AG04450 (cell line): ENCODE measurements at regions of chr2 and their contacts with region 1.

Region 1: GRCh38 chr2:42828487-42829425 is 36.4 kb upstream of the HAAO start:
- DNase-seq: no peak
- H3K4me3 ChIP-seq: no peak overlapping the region
- H3K27ac ChIP-seq: no peak overlapping the region
- H3K27me3 ChIP-seq: no peaks in the 10 kb centered on the region
- CTCF ChIP-seq: peak; percentile 87

Region 2: GRCh38 chr2:42804338-42804737 is 24.4 kb before region 1 on chr2:
- CTCF ChIA-PET with region 1: no interaction called
- POLR2A ChIA-PET with region 1: no interaction called
- DNase-seq: no peak
- H3K4me3 ChIP-seq: no peak overlapping the region
- H3K27ac ChIP-seq: no peak overlapping the region
- H3K27me3 ChIP-seq: peaks cover 6% of the 10 kb centered on the region
- CTCF ChIP-seq: no peak

Region 3: DNA sequence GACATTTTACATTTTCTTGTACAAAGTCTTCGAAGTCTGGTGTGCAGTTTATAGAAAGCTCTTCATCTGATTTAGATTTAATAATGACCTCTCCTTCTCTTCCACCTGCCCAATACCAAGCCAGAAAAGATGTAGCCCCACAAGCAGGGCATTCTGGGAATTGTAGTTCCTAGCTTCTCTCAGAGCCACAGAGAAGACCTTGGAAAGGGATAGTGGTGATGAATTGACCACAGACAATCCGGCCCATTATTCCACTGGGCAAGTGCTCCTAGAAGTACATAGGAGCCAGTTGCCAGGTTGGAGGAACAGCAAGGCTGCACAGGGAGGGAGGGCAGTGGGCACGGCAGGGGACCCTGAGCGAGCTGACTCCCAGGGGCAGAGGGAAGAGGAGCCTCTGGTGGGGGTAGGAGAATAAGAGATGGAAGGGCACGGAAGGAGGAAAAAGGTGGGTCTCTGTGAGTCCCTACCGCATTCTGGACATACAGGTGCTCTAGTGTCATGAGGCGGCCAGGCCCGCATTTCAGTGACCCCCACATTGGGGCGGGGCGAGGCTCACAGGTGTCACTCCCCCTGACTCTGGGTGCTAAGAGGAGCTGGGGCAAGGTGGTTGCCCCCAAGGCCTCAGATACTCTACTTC is 116.1 kb after region 1 on chr2:
- CTCF ChIA-PET with region 1: interaction called, 40 read pairs
- POLR2A ChIA-PET with region 1: no interaction called
- DNase-seq: no peak
- H3K4me3 ChIP-seq: no peak overlapping the region
- H3K27ac ChIP-seq: no peak overlapping the region
- H3K27me3 ChIP-seq: no peaks in the 10 kb centered on the region
- CTCF ChIP-seq: no peak

Region 4: DNA sequence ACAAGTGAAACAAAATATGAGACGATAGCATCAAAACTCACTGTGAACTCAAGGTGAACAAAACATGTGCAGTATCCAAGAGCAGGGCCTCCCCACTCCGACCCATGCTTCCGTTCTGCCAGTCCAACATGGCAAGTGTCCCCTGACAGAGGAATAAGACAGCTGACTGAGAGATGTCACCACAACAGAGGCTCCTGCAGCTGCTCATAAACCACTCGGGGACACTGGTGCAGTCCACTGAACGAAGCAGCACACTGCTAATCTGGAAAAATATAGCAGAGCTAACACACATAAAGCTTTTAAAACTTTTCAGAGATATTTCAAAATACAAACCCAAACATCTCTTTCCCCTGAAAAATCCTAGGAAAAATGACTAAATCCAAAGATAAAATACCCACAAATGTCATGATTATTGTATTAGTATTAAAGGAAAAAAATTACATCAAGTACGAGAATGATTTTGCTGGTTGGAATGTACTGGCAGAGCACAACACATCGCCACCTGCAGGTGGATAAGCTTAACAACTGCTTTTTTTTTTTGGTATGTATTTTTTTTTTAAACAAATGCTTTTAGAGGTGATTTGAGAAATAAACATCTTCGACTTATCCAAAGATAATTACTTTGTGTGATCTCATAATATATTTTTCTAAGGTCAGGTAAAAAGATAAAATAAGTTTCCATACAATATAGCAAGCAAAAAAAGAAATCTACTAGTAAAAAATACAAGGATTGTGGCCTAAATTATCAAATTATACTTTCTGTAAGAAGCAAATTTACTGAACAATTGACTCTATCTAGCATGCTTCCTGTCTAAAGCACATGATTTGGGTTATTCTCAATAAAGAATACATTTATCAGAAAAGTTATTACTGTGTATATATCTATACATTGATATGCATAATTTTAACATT is 748.5 kb after region 1 on chr2:
- CTCF ChIA-PET with region 1: interaction called, 25 read pairs
- POLR2A ChIA-PET with region 1: no interaction called
- DNase-seq: peak; percentile 32
- H3K4me3 ChIP-seq: no peak overlapping the region
- H3K27ac ChIP-seq: no peak overlapping the region
- H3K27me3 ChIP-seq: no peaks in the 10 kb centered on the region
- CTCF ChIP-seq: peak; percentile 84